MCF 10A (cell line): ENCODE measurements at regions of chr4 and their contacts with region 1.

Region 1: GRCh38 chr4:7067452-7068278 is at the start of gene GRPEL1:
- DNase-seq: peak; percentile 100
- H3K4me3 Mint-ChIP-seq: peak within 1 kb of the TSS; percentile 90
- H3K27ac Mint-ChIP-seq: peak within 1 kb of the TSS; percentile 59
- H3K4me1 Mint-ChIP-seq: peaks cover 23% of the 10 kb centered on the region
- H3K27me3 Mint-ChIP-seq: peaks cover 14% of the 10 kb centered on the region
- CTCF ChIP-seq: no peak
- total RNA-seq, gene GRPEL1: 73.0 and 82.9 TPM in 2 replicates

Region 2: DNA sequence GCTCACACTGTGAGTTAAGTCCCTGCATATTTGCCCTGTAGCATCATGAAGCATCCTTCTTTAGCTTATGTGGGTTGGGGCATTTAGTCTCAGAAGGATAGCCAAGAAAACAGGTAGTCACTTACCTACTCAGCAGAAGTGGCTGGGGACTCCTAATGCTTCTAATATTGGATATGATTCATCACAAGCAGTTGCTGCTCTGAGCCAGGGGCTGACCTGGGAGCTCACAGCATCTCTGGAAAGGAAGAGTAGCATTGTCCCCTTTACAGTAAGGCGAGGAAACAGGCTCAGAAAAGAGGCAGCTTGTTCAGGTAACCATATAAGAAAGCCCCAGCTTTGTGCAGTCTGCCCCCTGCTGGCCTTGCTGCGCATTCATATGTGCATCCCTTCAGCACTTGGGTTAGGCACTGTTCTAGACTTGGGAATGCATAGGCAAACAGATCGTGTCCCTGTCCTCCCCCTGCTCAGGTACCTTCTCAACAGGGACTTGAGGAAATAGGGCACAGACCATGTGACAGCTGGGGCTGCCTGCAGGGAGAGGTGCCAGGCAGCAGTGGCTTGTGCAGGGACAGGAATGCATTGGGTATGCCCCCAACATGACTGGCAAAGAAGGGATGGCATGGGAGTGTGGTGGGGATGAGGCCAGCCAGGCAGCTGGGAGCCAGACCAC is 193.7 kb before region 1 on chr4:
- CTCF ChIA-PET with region 1: interaction called, 7 read pairs
- POLR2A ChIA-PET with region 1: no interaction called
- intact Hi-C with region 1: loop called (anchors 5 kb)
- DNase-seq: peak; percentile 65
- H3K4me3 Mint-ChIP-seq: no peak overlapping the region
- H3K27ac Mint-ChIP-seq: no peak overlapping the region
- H3K4me1 Mint-ChIP-seq: no peaks in the 10 kb centered on the region
- H3K27me3 Mint-ChIP-seq: no peaks in the 10 kb centered on the region
- CTCF ChIP-seq: peak; percentile 88

Region 3: DNA sequence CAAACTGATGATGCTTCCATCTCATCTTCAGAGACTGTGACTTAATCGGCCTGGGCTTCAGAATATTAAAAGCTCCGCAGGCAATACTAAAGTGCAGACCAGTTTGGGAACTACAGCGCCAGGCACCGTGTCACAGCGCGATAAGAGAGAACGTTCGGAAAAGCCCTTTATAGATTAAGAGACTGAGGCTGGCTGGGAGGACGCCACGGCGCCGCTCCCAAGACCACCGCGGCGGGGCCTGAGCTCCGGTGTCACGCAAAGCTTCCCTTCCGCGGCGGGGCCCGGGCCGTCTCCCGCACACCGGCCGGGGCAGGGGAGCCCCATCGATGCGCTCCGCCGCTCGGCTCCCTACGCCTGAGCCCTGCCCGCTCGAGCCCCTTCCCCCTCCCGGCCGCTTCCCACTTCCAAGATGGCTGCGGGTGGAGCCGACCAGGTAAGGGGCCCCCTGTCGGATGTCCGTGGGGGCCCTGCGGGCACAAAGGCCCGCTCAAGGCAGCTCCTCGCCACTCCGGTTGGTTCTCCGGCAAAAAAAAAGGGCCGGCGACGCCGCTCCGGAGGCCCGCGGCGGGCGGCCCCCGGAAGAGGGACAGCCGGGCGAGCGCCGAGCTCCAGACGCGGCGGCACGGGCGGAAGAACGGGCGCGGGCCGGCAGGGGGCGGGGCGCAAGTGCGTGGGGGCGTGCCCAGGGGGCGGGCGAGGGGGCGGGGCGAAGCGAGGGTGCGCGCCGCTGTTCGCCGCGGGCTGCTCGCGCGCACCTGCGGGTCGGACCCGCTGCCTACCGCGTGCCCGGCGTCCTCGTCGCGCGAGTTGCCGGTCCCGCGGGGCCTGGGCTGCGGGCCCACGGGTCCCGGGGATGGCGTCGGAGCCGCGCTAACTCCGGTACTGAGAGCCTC is 158.3 kb before region 1 on chr4 and contains the start of gene TBC1D14:
- CTCF ChIA-PET with region 1: interaction called, 9 read pairs
- POLR2A ChIA-PET with region 1: interaction called, 24 read pairs
- intact Hi-C with region 1: loop called (anchors 1 kb)
- DNase-seq: peak; percentile 87
- H3K4me3 Mint-ChIP-seq: peak within 1 kb of the TSS; percentile 91
- H3K27ac Mint-ChIP-seq: peak within 1 kb of the TSS; percentile 77
- H3K4me1 Mint-ChIP-seq: peaks cover 29% of the 10 kb centered on the region
- H3K27me3 Mint-ChIP-seq: no peaks in the 10 kb centered on the region
- CTCF ChIP-seq: no peak
- total RNA-seq, gene TBC1D14: 52.6 and 55.1 TPM in 2 replicates

Region 4: DNA sequence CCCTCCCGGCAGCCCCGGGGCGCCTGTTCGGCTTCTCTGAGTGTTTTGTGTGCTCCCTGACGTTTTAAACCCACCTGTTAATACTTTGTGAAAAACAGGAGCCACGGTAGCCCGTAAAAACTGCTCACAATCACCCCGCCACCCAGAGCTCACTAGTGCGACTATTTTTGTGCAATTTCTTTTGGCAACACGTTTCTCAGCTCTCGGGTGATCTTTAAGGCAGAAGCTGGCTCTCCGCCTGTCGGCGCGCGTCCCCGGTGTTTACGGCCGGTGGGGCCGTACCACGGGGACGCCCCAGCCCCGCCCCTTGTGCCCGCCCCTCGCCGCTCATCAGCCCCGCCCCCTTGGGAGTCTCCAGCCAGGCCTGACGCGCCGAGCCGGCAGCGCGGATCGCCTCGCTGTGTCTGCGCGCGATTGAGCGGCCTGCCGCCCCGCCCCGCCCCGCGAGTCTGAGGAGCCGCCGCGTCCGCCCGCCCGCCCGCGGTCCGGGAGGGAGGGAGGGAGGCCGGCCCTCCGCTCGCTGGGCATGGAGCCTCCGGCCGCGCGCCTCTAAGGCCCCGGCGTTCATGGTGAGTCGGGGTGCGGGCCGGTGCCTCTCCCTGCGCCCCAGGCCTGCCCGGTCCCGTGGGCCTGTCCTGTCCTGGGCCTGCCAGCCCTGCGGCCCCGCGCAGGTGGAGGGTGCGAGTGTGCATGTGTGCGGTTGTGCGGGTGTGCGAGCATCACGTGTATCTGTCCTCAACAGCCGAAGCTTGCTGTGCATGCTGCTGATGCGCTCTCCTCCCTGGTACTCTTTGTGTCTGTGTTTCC is 80.7 kb before region 1 on chr4:
- CTCF ChIA-PET with region 1: interaction called, 9 read pairs
- POLR2A ChIA-PET with region 1: interaction called, 87 read pairs
- intact Hi-C with region 1: loop called (anchors 1 kb)
- DNase-seq: peak; percentile 95
- H3K4me3 Mint-ChIP-seq: peak overlapping the region; percentile 97
- H3K27ac Mint-ChIP-seq: peak overlapping the region; percentile 95
- H3K4me1 Mint-ChIP-seq: peaks cover 45% of the 10 kb centered on the region
- H3K27me3 Mint-ChIP-seq: no peaks in the 10 kb centered on the region
- CTCF ChIP-seq: no peak

Region 5: DNA sequence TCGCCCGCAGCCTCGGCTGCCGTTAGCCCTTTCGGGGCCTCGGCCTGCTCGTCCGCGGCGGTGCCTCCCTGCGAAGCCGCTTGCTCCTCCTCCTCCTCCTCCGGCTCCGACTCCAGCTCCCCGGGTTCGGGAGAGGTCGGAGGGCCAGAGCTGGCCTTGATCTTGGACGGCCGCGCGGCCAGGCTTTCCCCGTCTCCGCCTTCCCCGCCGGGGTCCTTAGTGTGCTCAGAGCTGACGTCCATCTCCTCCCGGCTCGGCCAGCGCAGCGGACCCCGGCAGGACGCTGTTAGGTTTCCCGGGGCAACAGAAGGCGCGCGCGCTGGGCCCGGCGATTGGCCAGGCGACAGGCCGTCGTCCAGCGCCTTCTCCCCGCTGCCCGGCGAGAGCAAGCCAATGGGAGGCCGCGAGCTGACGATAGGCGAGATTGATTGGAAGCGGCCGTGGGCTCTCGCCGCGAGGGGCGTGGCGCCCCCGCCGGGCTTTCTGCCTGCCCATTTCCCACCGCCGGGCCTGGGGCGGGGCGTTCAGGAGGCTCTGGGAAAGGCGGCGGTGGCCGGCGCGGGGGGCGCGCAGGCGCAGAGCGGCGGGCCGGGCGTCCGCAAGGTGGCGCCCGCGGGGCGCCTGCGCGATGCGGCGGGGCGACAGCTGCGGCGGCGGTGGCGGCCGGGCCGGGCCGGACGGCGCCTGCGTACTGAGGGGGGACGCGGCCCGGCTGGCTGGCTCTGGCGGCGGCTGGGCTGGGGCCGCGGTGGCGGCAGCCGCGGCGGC is 24.8 kb before region 1 on chr4 and contains the start of gene TADA2B:
- CTCF ChIA-PET with region 1: interaction called, 98 read pairs
- POLR2A ChIA-PET with region 1: interaction called, 165 read pairs
- intact Hi-C with region 1: loop called (anchors 1 kb)
- DNase-seq: peak; percentile 98
- H3K4me3 Mint-ChIP-seq: peak within 1 kb of the TSS; percentile 88
- H3K27ac Mint-ChIP-seq: peak within 1 kb of the TSS; percentile 85
- H3K4me1 Mint-ChIP-seq: peaks cover 39% of the 10 kb centered on the region
- H3K27me3 Mint-ChIP-seq: no peaks in the 10 kb centered on the region
- CTCF ChIP-seq: peak; percentile 29
- total RNA-seq, gene TADA2B: 29.5 and 31.8 TPM in 2 replicates

Region 6: GRCh38 chr4:7081891-7082471 is 14.3 kb after region 1 on chr4:
- CTCF ChIA-PET with region 1: interaction called, 48 read pairs
- POLR2A ChIA-PET with region 1: interaction called, 3 read pairs
- intact Hi-C with region 1: no loop called
- DNase-seq: peak; percentile 80
- H3K4me3 Mint-ChIP-seq: no peak overlapping the region
- H3K27ac Mint-ChIP-seq: no peak overlapping the region
- H3K4me1 Mint-ChIP-seq: peaks cover 7% of the 10 kb centered on the region
- H3K27me3 Mint-ChIP-seq: peaks cover 17% of the 10 kb centered on the region
- CTCF ChIP-seq: peak; percentile 57

Region 7: DNA sequence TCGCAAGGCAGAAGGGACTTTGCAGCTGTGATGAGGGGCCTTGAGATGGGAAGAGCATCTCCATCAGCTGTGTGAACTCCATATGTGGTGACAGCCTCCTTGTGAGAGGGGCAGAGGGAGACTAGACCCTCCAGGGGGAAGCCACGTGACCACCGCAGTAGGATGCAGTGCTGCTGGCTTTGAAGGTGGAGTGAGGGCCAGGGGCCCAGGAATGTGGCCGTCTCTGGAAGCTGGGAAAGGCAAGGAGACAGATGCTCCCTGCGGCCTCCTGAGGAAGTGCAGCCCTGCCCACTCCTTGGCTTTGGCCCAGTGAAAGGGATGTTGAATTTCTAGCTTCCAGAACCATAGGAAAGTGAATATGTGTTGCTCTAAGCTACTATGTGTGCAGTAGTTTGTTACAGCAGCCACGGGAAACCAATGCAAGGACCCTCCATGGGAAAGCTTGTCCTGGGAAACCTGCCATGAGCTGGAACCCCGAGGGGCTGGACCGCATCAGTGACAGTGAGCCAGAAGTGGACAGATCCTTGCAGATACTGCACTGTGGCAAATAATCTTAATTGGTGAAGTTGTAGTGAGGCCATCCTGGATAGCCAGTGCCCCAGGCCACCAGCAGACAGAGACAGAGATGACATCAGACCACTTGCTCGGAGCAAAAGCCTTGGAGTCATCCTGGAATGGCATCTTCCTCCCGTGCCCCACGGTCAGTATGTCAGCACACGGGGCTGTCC is 89.3 kb after region 1 on chr4:
- CTCF ChIA-PET with region 1: no interaction called
- POLR2A ChIA-PET with region 1: no interaction called
- intact Hi-C with region 1: no loop called
- DNase-seq: no peak
- H3K4me3 Mint-ChIP-seq: no peak overlapping the region
- H3K27ac Mint-ChIP-seq: no peak overlapping the region
- H3K4me1 Mint-ChIP-seq: peaks cover 11% of the 10 kb centered on the region
- H3K27me3 Mint-ChIP-seq: peaks cover 11% of the 10 kb centered on the region
- CTCF ChIP-seq: no peak

Region 8: GRCh38 chr4:7347981-7348380 is 280.3 kb after region 1 on chr4:
- CTCF ChIA-PET with region 1: no interaction called
- POLR2A ChIA-PET with region 1: no interaction called
- intact Hi-C with region 1: no loop called
- DNase-seq: peak; percentile 26
- H3K4me3 Mint-ChIP-seq: no peak overlapping the region
- H3K27ac Mint-ChIP-seq: no peak overlapping the region
- H3K4me1 Mint-ChIP-seq: no peaks in the 10 kb centered on the region
- H3K27me3 Mint-ChIP-seq: peaks cover 18% of the 10 kb centered on the region
- CTCF ChIP-seq: no peak